ENCODE measurements at regions of chr15 and their contacts with region 1.

Region 1: DNA sequence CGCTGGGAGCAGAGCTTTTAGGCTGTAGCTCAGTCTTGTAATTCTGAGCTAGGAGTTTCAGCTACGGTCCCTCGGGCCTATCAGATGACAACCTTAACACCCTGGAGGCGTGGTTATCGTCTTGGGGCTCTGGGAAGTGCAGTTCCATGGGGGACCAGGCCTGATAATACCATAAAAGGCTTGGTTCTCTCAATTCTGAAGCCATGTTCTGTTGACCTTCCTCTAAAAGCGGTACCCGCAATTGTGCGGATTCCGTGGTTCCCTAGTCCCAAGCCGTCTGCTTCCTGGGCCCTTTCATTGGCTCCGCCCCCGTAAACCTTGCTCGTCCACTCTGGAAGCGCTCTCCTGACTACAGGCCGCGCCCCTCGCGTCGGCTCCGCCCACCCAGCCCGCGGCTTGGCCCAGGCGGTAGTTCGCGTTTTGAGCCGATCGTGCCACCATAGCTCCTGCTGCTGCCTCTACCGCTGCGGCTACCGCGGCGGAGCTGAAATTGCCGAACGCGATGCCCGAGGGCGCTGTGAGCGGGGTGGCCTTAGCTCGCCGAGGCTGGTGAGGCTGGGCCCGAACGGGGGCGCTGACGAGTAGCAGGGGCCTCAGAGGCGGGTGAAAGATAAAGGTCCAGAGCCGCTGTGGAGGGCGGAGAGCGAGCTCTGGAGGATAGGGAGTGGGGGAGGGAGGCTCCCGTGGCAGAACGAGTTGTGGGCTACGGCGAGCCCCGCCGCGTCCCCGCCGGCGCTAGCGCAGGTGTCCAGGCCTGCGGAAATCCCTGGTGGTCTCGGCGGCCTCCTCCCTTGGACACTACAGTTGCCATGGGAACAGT is at the start of gene MAPKBP1:
- DNase-seq: peak; percentile 99
- ATAC-seq: peak; percentile 88
- H3K4me3 Mint-ChIP-seq: peak within 1 kb of the TSS; percentile 90
- H3K27ac Mint-ChIP-seq: peak within 1 kb of the TSS; percentile 84
- H3K4me1 Mint-ChIP-seq: peaks cover 56% of the 10 kb centered on the region
- H3K27me3 Mint-ChIP-seq: no peaks in the 10 kb centered on the region
- total RNA-seq, gene MAPKBP1: 16.1 to 19.0 TPM

Region 2: GRCh38 chr15:41506796-41507341 is 267.4 kb before region 1 on chr15:
- CTCF ChIA-PET with region 1: no interaction called
- POLR2A ChIA-PET with region 1: interaction called, 11 read pairs
- intact Hi-C with region 1: no loop called
- DNase-seq: no peak
- ATAC-seq: no peak
- H3K4me3 Mint-ChIP-seq: no peak overlapping the region
- H3K27ac Mint-ChIP-seq: no peak overlapping the region
- H3K4me1 Mint-ChIP-seq: peaks cover 7% of the 10 kb centered on the region
- H3K27me3 Mint-ChIP-seq: peaks cover 29% of the 10 kb centered on the region

Region 3: GRCh38 chr15:41660235-41661077 is 113.8 kb before region 1 on chr15 and contains the start of gene MGA:
- CTCF ChIA-PET with region 1: interaction called, 5 read pairs
- POLR2A ChIA-PET with region 1: no interaction called
- intact Hi-C with region 1: loop called in 1 of 2 experiments (anchors 1 kb)
- DNase-seq: peak; percentile 94
- ATAC-seq: peak; percentile 89
- H3K4me3 Mint-ChIP-seq: peak within 1 kb of the TSS; percentile 92
- H3K27ac Mint-ChIP-seq: peak within 1 kb of the TSS; percentile 95
- H3K4me1 Mint-ChIP-seq: peaks cover 42% of the 10 kb centered on the region
- H3K27me3 Mint-ChIP-seq: peaks cover 7% of the 10 kb centered on the region
- total RNA-seq, gene MGA: 33.7 to 39.3 TPM

Region 4: DNA sequence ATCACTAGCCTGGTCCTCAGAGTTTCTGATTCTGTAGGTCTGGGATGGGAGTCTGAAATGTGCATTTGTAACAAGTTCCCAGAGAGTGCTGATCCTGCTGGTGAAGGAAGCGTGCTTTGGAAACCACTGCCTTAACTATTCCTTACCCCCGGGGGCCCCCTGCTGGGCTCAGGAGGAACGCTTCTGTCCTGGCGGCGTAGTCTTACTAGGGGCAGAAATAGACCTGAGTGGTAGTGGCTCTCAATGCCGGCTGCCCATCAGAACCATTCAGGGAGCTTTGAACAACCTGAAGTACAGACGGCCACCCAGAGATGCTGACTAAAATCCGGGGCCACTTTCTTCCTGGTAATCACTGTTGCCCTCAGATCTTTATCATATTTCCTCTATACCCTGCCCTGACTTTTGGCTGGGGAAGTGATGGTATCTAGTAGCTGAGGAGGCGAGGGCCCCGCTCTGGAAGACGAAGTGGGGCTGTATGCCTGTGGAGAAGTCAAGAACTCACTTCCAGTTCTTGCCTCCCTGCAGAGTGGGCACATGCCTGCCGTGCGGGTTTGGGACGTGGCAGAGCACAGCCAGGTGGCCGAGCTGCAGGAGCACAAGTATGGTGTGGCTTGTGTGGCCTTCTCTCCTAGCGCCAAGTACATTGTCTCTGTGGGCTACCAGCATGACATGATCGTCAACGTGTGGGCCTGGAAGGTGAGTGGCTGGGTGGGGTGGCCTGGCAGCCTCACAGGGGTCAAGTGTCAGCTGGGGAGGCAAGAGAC is 37.3 kb after region 1 on chr15:
- CTCF ChIA-PET with region 1: interaction called, 233 read pairs
- POLR2A ChIA-PET with region 1: no interaction called
- intact Hi-C with region 1: loop called (anchors 1 kb)
- DNase-seq: peak; percentile 84
- ATAC-seq: peak; percentile 98
- H3K4me3 Mint-ChIP-seq: no peak overlapping the region
- H3K27ac Mint-ChIP-seq: no peak overlapping the region
- H3K4me1 Mint-ChIP-seq: no peaks in the 10 kb centered on the region
- H3K27me3 Mint-ChIP-seq: no peaks in the 10 kb centered on the region

Region 5: DNA sequence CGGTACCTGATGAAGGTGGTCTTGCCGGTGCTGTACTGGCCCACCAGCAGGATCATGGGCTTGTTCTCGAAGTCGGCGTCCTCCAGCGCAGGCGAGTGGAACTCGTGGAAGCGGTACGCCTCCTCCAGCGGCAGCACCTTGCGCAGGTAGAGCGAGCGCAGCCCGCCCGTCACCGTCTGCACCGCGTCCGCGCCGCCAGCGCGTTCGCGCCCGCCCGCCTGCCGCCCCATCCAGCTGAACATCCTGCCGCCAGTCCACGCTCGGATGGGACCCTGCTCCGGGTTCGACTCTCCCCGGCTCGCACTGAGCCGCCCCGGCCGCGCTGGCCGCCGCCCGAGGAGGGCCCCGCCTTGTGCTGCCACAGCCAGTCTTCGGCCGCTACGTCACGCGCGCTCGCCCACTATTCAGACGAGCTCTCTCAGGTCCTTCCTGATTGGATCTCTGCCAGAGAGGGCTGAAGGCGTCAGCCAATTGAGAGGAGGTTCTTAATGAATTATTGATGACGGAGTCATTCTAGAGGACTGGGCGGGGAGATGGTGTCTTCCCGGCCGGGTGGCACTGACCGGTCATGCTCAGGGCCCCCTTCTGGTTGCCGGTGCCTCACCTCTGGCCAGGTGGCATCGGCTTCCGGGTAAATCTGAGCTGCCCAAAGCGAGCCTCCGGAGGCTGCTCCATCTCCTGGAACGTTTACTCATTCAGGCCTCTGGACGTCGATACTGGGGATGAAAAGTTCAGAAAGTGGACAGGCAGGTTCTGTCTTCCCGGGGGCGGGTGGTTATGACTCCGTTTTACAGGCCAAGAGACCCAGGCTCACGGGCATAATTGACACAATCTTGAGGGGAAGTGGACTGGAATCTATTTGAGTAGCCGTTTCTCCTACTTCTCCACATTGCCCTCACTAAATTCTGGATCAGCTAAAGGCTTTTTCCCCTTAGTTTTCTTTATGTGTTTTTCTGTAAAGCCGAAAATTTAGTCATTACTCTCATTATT is 198.3 kb after region 1 on chr15 and contains the start of gene EHD4:
- CTCF ChIA-PET with region 1: interaction called, 3 read pairs
- POLR2A ChIA-PET with region 1: interaction called, 4 read pairs
- intact Hi-C with region 1: loop called (anchors 1 to 2 kb)
- DNase-seq: peak; percentile 98
- ATAC-seq: peak; percentile 80
- H3K4me3 Mint-ChIP-seq: peak within 1 kb of the TSS; percentile 86
- H3K27ac Mint-ChIP-seq: peak within 1 kb of the TSS; percentile 94
- H3K4me1 Mint-ChIP-seq: peaks cover 53% of the 10 kb centered on the region
- H3K27me3 Mint-ChIP-seq: peaks cover 8% of the 10 kb centered on the region
- total RNA-seq, gene EHD4: 34.7 to 35.7 TPM

Region 6: DNA sequence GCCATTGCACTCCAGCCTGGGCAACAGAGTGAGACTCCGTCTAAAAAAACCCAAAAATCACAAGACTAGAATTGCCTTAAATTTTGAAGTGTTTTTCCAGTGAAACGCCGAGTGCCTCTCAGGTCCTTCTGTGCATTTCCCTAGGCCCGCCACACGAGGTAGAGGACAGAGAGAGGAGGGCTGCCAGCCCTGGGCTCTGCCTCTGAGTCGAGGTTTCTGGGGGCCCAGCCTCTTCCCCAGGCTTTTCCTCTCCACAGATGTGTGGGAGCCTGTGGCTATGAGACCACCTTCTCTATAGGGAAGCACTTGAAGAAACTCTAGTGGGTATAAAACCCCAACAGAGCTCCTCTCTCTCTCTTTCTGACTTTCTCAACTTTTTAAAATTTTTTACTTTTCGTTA is 208.9 kb after region 1 on chr15:
- CTCF ChIA-PET with region 1: no interaction called
- POLR2A ChIA-PET with region 1: no interaction called
- intact Hi-C with region 1: no loop called
- DNase-seq: peak; percentile 2
- ATAC-seq: no peak
- H3K4me3 Mint-ChIP-seq: no peak overlapping the region
- H3K27ac Mint-ChIP-seq: no peak overlapping the region
- H3K4me1 Mint-ChIP-seq: peaks cover 5% of the 10 kb centered on the region
- H3K27me3 Mint-ChIP-seq: no peaks in the 10 kb centered on the region

Measured in activated CD4-positive, alpha-beta T cell treated with anti-CD3 and anti-CD28 coated beads for 36 hours (primary cell).